OCI-LY7 (cell line): ENCODE measurements at regions of chr17 and their contacts with region 1.

Region 1: DNA sequence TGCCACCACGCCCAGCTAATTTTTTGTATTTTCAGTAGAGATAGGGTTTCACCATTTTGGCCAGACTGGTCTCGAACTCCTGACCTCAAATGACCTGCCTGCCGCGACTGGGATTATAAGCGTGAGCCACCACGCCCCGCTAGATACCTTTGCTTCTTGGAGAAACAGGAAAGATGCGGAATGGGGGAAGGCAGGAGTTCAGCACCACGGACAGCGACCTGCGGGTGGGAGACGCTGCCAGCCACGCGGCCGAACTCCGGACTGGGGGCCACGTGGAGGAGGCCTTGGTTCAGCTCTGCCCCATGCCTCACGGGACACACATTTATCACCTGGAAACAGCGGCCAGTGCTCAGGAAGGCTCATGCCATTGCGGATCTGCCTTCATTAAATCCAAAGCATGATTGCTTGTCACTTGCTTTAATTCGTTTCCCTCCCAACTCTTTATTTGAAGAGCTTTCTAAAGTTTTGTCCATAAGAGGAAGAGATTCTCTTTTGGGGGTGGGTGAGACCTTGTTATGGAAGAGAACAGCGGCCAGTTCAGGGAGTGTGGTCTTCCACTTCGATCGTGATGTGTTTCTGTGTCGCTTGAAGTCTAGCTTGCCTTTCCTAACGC is 219.9 kb downstream of the ENGASE start:
- DNase-seq: peak; percentile 31
- H3K4me3 ChIP-seq: no peak overlapping the region
- H3K27ac ChIP-seq: no peak overlapping the region
- H3K4me1 ChIP-seq: peaks cover 6% of the 10 kb centered on the region
- CTCF ChIP-seq: no peak

Region 2: DNA sequence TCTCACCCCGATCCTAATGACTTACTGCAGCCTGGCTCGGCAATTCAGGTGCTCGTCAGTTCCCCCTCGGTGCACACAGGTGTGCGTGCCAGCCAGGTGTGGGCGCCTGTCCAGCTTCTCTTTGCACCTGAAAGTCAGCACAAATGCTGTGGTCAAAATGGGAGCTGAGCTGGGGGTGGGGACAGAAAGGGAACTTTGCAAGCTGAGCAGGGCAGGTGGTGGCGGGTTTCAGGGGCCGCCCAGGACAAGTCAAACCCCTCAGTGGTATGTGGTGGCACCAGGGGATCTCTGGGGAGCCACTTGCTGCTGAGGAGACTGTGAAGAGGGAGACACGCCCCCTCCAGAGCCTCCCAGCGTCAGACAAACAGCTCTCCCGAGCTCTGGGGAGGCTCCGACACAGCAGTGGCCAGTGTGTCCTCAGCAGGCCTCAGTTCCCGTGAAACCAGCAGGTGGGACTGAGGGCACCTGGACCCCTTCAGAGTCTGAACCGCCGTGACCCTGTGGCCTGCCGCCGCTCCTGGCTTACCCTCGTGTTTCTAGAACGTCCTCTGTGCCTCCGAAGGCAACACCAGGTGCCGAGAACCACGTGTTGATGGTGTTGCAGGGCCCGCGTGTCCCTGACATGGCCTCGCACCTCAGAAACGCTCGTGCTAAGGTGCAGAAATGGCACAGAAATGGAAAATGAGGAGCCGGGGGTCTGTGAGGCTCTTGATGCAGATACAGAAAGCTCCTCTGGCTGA is 1569.5 kb before region 1 on chr17:
- CTCF ChIA-PET with region 1: no interaction called
- POLR2A ChIA-PET with region 1: no interaction called
- intact Hi-C with region 1: no loop called
- DNase-seq: peak; percentile 78
- H3K4me3 ChIP-seq: no peak overlapping the region
- H3K27ac ChIP-seq: no peak overlapping the region
- H3K4me1 ChIP-seq: peaks cover 18% of the 10 kb centered on the region
- CTCF ChIP-seq: no peak

Region 3: DNA sequence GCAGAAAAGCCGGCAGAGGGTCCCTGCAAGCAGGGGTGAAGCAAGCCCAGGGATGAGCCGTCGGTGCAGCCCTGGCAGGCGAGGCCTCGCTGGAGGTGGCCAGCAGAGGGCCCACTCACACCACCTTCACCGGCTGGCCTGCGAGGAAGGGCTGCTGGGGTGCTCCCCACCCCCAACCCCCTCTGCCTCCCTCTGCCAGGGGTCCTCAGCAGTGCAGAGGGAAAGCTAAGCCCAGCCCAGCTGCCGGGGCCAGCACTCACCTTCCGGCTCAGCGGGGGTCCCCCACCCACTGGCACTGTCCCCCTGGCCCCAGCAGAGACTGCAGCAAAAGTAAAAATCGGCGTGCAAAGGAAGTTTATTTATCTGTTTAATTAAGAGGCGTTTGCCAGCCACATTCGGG is 106.5 kb before region 1 on chr17:
- CTCF ChIA-PET with region 1: no interaction called
- POLR2A ChIA-PET with region 1: no interaction called
- intact Hi-C with region 1: loop called (anchors 10 kb)
- DNase-seq: peak; percentile 61
- H3K4me3 ChIP-seq: no peak overlapping the region
- H3K27ac ChIP-seq: no peak overlapping the region
- H3K4me1 ChIP-seq: no peaks in the 10 kb centered on the region
- CTCF ChIP-seq: peak; percentile 84

Region 4: GRCh38 chr17:79520167-79521165 is 225.9 kb after region 1 on chr17:
- CTCF ChIA-PET with region 1: no interaction called
- POLR2A ChIA-PET with region 1: no interaction called
- intact Hi-C with region 1: no loop called
- DNase-seq: no peak
- H3K4me3 ChIP-seq: no peak overlapping the region
- H3K27ac ChIP-seq: no peak overlapping the region
- H3K4me1 ChIP-seq: no peaks in the 10 kb centered on the region
- CTCF ChIP-seq: no peak

Region 5: GRCh38 chr17:79549141-79549915 is 254.8 kb after region 1 on chr17:
- CTCF ChIA-PET with region 1: no interaction called
- POLR2A ChIA-PET with region 1: no interaction called
- intact Hi-C with region 1: no loop called
- DNase-seq: no peak
- H3K4me3 ChIP-seq: no peak overlapping the region
- H3K27ac ChIP-seq: no peak overlapping the region
- H3K4me1 ChIP-seq: no peaks in the 10 kb centered on the region
- CTCF ChIP-seq: no peak

Region 6: DNA sequence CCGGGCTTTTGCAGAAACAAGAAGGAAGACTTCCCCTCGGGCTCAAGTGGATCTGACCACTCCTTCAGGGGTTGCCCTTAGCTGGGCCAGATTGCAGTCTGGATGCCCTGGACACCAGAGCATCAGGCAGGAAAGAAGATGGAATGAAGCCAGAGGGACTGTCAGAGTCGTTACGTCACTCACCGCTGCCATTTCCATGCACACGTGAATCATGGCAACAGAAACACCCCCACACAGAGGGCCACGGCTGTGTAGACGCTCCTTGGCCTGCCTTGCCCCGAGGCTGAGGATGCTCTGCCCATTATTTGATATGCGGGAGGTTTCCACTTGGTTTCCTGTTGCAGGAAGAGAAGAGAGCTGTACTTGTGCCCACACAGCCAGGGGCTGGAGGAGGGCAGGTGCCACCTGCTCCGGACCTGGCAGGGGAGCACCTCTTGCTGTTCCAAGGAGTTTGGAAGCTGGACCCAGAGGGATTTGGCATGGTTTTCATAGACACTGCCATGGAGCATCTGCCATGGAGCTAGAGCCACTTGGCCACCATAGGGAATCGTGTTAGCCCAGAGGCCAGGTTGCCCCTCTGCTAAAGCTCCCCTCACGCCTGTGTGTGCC is 286.9 kb after region 1 on chr17:
- CTCF ChIA-PET with region 1: no interaction called
- POLR2A ChIA-PET with region 1: no interaction called
- intact Hi-C with region 1: no loop called
- DNase-seq: no peak
- H3K4me3 ChIP-seq: no peak overlapping the region
- H3K27ac ChIP-seq: no peak overlapping the region
- H3K4me1 ChIP-seq: no peaks in the 10 kb centered on the region
- CTCF ChIP-seq: no peak